ENCODE measurements at regions of chr19 and their contacts with region 1.

Region 1: DNA sequence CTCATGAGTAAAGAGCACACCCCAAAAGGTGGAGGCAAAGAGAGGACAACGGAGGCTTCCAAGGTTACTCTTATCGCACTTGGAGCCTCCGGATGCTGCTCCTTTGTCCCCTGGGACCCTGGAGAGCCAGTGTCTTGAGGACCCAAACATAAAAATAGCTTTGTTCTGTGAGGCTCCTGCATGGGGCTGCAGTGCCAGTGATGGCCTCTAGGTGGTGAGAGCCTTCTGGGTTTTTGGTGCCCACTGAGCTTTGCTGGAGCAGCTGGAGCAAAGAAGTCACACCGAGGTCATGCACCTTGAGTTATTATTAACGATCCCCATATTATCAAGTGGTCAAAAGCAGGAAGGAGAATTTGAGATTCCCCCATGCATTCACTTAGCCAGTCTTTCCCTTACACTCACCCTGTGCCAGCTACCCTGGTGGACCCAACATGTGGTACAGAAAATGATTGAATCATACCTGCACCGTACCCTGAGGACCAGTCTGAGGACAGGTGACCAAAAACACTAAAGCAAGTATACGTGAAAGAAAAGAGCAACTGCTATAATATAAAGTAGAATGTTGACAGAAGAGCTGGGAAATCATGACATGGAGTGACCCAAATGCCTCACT is 41.5 kb downstream of the ZNF682 start:
- DNase-seq: peak; percentile 81
- ATAC-seq: peak; percentile 90
- H3K4me3 Mint-ChIP-seq: no peak overlapping the region
- H3K27ac Mint-ChIP-seq: no peak overlapping the region
- H3K4me1 Mint-ChIP-seq: peaks cover 4% of the 10 kb centered on the region
- H3K27me3 Mint-ChIP-seq: no peaks in the 10 kb centered on the region; the same call in 1 of the 2 replicates
- CTCF ChIP-seq: peak; percentile 95

Region 2: DNA sequence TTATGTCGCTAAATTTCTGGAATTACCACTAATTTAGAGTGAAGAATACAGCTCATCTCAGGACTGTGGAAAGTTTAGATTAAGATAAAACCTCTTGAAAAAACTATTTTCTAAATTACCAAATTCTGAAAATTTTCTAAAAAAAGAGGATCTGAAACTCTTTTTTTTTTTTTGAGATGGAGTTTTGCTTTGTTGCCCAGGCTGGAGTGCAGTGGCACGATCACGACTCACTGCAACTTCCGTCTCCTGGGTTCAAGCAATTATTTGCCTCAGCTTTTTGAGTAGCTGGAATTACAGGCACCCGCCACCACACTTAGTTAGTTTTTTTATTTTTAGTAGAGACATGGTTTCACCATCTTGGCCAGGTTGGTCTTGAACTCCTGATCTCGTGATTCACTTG is 148.7 kb before region 1 on chr19:
- CTCF ChIA-PET with region 1: no interaction called
- POLR2A ChIA-PET with region 1: no interaction called
- DNase-seq: no peak
- ATAC-seq: no peak
- H3K4me3 Mint-ChIP-seq: no peak overlapping the region
- H3K27ac Mint-ChIP-seq: no peak overlapping the region
- H3K4me1 Mint-ChIP-seq: no peaks in the 10 kb centered on the region
- H3K27me3 Mint-ChIP-seq: no peaks in the 10 kb centered on the region
- CTCF ChIP-seq: no peak

Region 3: GRCh38 chr19:20039203-20039723 is 41.5 kb after region 1 on chr19 and contains the start of gene ZNF682:
- CTCF ChIA-PET with region 1: interaction called, 13 read pairs
- POLR2A ChIA-PET with region 1: interaction called, 7 read pairs
- DNase-seq: peak; percentile 99
- ATAC-seq: peak; percentile 100
- H3K4me3 Mint-ChIP-seq: peak within 1 kb of the TSS; percentile 91
- H3K27ac Mint-ChIP-seq: peak within 1 kb of the TSS; percentile 98
- H3K4me1 Mint-ChIP-seq: peaks cover 17% of the 10 kb centered on the region
- H3K27me3 Mint-ChIP-seq: no peaks in the 10 kb centered on the region
- CTCF ChIP-seq: no peak
- total RNA-seq, gene ZNF682: 20.5 to 25.4 TPM (median 20.8 TPM) in 3 replicates

Region 4: GRCh38 chr19:20067943-20068342 is 70.2 kb after region 1 on chr19:
- CTCF ChIA-PET with region 1: interaction called, 10 read pairs
- POLR2A ChIA-PET with region 1: no interaction called
- DNase-seq: no peak
- ATAC-seq: peak; percentile 83
- H3K4me3 Mint-ChIP-seq: peak overlapping the region; percentile 62
- H3K27ac Mint-ChIP-seq: peak overlapping the region; percentile 83
- H3K4me1 Mint-ChIP-seq: peaks cover 48% of the 10 kb centered on the region
- H3K27me3 Mint-ChIP-seq: peaks cover 2% of the 10 kb centered on the region; the same call in 1 of the 2 replicates
- CTCF ChIP-seq: no peak

Region 5: GRCh38 chr19:20103091-20103740 is 105.5 kb after region 1 on chr19:
- CTCF ChIA-PET with region 1: interaction called, 23 read pairs
- POLR2A ChIA-PET with region 1: no interaction called
- DNase-seq: no peak
- ATAC-seq: peak; percentile 20; the same call in 1 of the 2 replicates
- H3K4me3 Mint-ChIP-seq: no peak overlapping the region
- H3K27ac Mint-ChIP-seq: peak overlapping the region; percentile 80
- H3K4me1 Mint-ChIP-seq: peaks cover 79% of the 10 kb centered on the region
- H3K27me3 Mint-ChIP-seq: no peaks in the 10 kb centered on the region
- CTCF ChIP-seq: no peak

Region 6: DNA sequence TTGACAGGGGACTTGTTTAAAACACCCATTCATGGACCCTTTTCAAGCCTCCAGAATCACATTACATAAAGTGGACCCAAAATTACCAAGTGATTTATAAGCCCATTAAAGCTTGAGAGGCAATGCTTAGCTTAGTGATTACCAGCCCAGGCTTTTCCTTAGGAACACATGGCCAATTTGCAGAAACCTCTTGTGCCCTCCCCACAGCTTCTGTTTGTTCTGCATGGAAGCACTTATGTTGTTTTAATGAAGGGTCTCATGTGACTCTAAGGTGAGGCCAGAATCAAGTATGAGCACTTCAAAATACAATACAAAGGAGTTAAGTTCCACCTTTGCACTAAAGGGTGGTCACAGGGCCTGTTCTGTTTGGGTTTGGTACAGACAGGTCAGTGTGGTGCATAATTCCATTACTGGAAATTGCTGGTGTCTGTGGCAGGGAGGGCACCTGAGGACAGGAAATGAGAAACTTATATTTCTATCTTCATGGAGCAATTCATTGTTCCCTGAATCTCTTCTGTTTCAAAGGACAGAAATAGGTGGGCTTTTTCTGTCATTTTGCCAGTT is 184.5 kb after region 1 on chr19:
- CTCF ChIA-PET with region 1: interaction called, 13 read pairs
- POLR2A ChIA-PET with region 1: no interaction called
- DNase-seq: no peak
- ATAC-seq: no peak
- H3K4me3 Mint-ChIP-seq: no peak overlapping the region
- H3K27ac Mint-ChIP-seq: peak overlapping the region; percentile 74; the same call in 1 of the 2 replicates
- H3K4me1 Mint-ChIP-seq: peaks cover 9% of the 10 kb centered on the region
- H3K27me3 Mint-ChIP-seq: no peaks in the 10 kb centered on the region
- CTCF ChIP-seq: no peak

Region 7: DNA sequence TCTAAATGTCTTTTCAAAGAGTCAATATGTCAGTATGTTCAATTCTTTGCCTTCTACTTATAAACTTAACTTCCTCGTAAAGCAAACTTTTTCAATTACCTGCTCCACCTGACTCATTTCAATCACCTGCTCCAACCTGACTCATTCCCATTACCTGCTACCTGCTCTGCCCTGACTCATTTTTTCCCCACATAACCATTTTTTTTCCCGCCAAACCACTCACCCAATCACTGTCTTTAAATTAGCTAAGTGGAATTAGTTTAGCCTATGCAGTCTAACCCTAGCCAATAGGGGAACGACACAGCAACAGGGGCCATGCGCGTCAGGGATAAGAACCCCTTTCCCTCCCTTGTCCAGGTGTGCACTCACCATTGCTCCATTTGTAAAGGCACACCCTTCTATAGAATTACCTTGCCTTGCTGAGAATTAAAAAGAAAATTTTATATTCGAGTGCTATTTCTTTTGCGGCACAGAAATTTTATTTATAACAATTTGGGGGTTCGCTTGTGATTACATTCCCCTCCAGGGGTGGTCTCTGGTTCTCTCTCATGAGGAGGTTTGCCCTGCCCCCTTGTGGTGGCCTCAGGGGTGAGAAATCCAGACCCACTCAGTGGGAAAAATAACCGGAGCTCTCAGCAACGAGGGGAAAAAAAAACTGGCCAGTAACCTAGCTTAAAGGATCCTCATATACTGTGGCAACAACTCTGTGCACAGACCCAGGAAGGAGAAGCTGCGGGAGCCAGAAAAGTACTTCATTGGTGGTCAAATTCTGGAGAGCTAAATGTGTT is 362.4 kb after region 1 on chr19:
- CTCF ChIA-PET with region 1: interaction called, 10 read pairs
- POLR2A ChIA-PET with region 1: no interaction called
- DNase-seq: peak; percentile 80
- ATAC-seq: peak; percentile 65
- H3K4me3 Mint-ChIP-seq: peak overlapping the region; percentile 24; the same call in 1 of the 2 replicates
- H3K27ac Mint-ChIP-seq: peak overlapping the region; percentile 14
- H3K4me1 Mint-ChIP-seq: peaks cover 57% of the 10 kb centered on the region
- H3K27me3 Mint-ChIP-seq: peaks cover 49% of the 10 kb centered on the region
- CTCF ChIP-seq: peak; percentile 78; the same call in 1 of the 2 replicates